Activated B cell treated with CpG ODN at 0.5 μM for 24 hours (primary cell): ENCODE measurements at regions of chr3 and their contacts with region 1.

Region 1: DNA sequence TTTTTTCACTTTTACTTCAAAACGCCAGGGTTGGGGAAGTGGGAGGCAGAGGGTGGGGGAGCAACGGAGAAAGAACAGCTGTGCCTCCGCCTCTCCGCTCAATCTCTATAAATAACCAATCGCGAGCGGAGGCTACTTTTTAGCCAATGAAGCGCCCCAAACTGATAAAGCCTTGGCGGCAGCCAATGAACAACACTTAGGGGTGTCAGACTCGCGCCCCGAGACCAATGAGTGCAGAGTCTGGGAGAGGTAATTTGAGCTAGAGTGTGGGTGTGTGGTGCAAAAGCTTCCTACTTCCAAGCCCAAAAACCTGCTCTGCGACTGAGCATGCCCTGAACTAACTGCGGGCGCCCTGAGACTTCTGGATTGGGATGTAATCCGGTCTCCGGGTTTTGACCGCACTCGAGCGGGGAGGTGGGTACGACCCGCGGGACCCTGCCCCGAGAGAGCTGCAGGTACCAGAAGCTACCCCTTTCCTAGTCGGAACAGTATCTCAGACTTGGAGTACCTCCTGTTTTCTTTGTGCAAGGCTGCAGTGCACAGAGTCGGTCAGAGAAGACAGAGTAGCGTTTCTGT is 800 bp upstream of the RAP2B start:
- DNase-seq: peak; percentile 68
- ATAC-seq: peak; percentile 77
- H3K4me3 Mint-ChIP-seq: peak overlapping the region; percentile 97
- H3K27ac Mint-ChIP-seq: peak overlapping the region; percentile 97
- H3K4me1 Mint-ChIP-seq: peaks cover 43% of the 10 kb centered on the region
- H3K27me3 Mint-ChIP-seq: no peaks in the 10 kb centered on the region
- CTCF ChIP-seq: no peak

Region 2: GRCh38 chr3:151265866-151266265 is 1895.4 kb before region 1 on chr3:
- CTCF ChIA-PET with region 1: no interaction called
- POLR2A ChIA-PET with region 1: no interaction called
- intact Hi-C with region 1: loop called (anchors 5 kb)
- DNase-seq: peak; percentile 44
- ATAC-seq: peak; percentile 87
- H3K4me3 Mint-ChIP-seq: peak overlapping the region; percentile 60
- H3K27ac Mint-ChIP-seq: peak overlapping the region; percentile 98
- H3K4me1 Mint-ChIP-seq: peaks cover 66% of the 10 kb centered on the region
- H3K27me3 Mint-ChIP-seq: no peaks in the 10 kb centered on the region
- CTCF ChIP-seq: no peak

Region 3: DNA sequence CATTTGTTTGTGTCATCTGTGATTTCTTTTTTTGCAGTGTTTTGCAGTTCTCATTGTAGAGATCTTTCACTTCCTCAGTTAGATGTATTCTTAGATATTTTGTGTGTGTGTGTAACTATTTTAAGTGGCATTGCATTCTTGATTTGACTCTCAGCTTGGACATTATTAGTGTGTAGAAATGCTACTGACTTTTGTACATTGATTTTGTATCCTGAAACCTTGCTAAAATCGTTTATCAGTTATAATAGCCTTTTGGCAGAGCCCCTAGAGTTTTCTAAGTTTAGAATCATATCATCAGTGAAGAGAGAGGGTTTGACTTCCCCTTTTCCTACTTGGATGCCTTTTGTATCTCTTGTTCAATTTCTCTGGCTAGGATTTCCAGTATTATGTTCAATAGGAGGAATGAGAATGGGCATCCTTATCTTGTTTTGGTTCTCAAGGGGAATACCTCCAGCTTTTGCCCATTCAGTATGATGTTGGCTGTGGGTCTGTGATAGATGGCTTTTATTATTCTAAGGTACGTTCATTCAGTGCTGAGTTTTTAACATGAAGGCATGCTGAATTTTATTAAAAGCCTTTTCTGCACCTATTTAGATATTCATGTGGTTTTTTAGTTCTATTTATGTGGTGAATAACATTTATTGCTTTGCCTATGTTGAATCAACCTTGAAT is 680.8 kb before region 1 on chr3:
- CTCF ChIA-PET with region 1: no interaction called
- POLR2A ChIA-PET with region 1: no interaction called
- intact Hi-C with region 1: loop called (anchors 5 kb)
- DNase-seq: no peak
- ATAC-seq: peak; percentile 49
- H3K4me3 Mint-ChIP-seq: peak overlapping the region; percentile 55
- H3K27ac Mint-ChIP-seq: peak overlapping the region; percentile 82
- H3K4me1 Mint-ChIP-seq: peaks cover 54% of the 10 kb centered on the region
- H3K27me3 Mint-ChIP-seq: no peaks in the 10 kb centered on the region
- CTCF ChIP-seq: no peak

Region 4: DNA sequence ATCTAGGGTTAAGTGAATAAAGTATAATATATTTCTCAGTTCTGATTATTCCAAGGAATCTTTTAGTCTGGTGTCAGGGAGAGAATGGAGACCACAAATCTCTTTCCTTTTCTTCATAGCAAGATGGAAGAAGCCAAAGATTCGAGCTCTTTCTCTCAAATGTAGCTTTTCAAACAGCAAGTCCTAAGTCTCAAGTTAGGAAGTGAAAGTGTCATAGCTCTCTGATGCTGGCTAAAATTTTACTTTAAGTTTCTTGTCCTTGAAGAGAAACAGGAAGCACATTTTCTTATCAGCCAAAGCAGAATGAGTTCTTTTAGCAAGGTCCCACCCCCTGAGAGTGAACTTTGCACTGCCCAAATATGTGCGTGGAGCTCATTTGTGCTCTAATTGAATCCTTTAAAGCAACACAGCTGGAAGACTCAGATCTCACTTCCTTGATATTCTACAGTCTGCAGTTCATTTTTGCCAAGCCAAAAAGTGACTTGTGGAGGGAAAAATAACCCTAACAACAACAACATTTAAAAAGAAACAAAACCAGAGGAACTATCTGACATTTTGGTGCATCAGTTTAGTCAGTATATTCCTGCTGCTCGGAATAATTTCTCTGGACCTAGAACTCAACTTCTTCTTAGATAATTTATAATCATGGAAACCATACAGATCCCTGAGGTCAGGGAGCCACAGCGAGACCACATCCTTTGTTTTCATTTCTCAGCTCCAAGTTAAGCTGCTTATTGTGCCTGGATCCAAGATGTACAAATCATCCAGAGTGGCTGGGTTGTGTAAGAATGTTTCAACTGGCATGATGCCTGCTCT is 565.0 kb before region 1 on chr3:
- CTCF ChIA-PET with region 1: no interaction called
- POLR2A ChIA-PET with region 1: interaction called, 5 read pairs
- intact Hi-C with region 1: loop called (anchors 10 kb)
- DNase-seq: no peak
- ATAC-seq: peak; percentile 96
- H3K4me3 Mint-ChIP-seq: peak overlapping the region; percentile 79
- H3K27ac Mint-ChIP-seq: peak overlapping the region; percentile 98
- H3K4me1 Mint-ChIP-seq: peaks cover 29% of the 10 kb centered on the region
- H3K27me3 Mint-ChIP-seq: no peaks in the 10 kb centered on the region
- CTCF ChIP-seq: no peak

Region 5: GRCh38 chr3:153221748-153222162 is 60.5 kb after region 1 on chr3:
- CTCF ChIA-PET with region 1: interaction called, 4 read pairs
- POLR2A ChIA-PET with region 1: interaction called, 38 read pairs
- intact Hi-C with region 1: loop called (anchors 5 kb)
- DNase-seq: no peak
- ATAC-seq: peak; percentile 91
- H3K4me3 Mint-ChIP-seq: peak overlapping the region; percentile 78
- H3K27ac Mint-ChIP-seq: peak overlapping the region; percentile 85
- H3K4me1 Mint-ChIP-seq: peaks cover 42% of the 10 kb centered on the region
- H3K27me3 Mint-ChIP-seq: no peaks in the 10 kb centered on the region
- CTCF ChIP-seq: no peak

Region 6: DNA sequence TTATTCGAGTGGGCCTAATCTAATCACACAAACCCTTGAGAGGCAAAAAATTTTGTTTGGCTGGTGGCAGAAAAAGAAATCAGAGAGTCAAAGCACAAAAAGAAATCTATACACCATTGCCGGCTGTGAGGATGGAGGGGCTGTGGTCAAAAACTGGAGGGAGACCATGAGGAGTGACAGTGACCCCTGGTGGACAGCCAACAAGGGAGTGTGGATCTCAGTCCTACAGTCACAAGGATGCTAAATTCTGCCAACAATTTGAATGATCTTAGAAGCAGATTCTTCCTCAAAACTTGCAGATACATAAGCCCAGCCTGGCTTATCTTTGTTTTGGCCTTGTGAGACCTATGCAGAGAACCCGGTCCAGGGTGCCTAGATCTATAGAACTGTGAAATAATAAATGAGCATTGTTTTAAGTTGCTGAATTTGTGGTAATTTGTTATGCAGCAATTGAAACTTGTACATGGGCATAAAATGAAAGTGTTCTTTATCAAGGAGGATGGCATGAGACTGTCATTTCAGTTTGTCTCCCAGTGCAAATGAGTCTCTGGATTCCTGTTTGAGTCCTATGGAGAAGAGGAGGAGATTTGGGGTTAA is 857.0 kb after region 1 on chr3:
- CTCF ChIA-PET with region 1: no interaction called
- POLR2A ChIA-PET with region 1: no interaction called
- intact Hi-C with region 1: loop called (anchors 10 kb)
- DNase-seq: no peak
- ATAC-seq: peak; percentile 42
- H3K4me3 Mint-ChIP-seq: no peak overlapping the region
- H3K27ac Mint-ChIP-seq: no peak overlapping the region
- H3K4me1 Mint-ChIP-seq: no peaks in the 10 kb centered on the region
- H3K27me3 Mint-ChIP-seq: no peaks in the 10 kb centered on the region
- CTCF ChIP-seq: no peak